ENCODE measurements at regions of chr4 and their contacts with region 1.

Region 1: GRCh38 chr4:781493-782216 is 44.3 kb downstream of the CPLX1 start:
- DNase-seq: peak; percentile 96 to 100 (median 99)
- H3K4me3 ChIP-seq: peak overlapping the region; percentile 74 to 100 (median 99)
- H3K27ac ChIP-seq: peak overlapping the region; percentile 73 to 99 (median 95)
- H3K27me3 ChIP-seq: peaks cover 0 to 25% (median 13%) of the 10 kb centered on the region in 45 donors
- CTCF ChIP-seq: peak in 13 of 56 donors; percentile 2 to 39 (median 12)

Region 2: DNA sequence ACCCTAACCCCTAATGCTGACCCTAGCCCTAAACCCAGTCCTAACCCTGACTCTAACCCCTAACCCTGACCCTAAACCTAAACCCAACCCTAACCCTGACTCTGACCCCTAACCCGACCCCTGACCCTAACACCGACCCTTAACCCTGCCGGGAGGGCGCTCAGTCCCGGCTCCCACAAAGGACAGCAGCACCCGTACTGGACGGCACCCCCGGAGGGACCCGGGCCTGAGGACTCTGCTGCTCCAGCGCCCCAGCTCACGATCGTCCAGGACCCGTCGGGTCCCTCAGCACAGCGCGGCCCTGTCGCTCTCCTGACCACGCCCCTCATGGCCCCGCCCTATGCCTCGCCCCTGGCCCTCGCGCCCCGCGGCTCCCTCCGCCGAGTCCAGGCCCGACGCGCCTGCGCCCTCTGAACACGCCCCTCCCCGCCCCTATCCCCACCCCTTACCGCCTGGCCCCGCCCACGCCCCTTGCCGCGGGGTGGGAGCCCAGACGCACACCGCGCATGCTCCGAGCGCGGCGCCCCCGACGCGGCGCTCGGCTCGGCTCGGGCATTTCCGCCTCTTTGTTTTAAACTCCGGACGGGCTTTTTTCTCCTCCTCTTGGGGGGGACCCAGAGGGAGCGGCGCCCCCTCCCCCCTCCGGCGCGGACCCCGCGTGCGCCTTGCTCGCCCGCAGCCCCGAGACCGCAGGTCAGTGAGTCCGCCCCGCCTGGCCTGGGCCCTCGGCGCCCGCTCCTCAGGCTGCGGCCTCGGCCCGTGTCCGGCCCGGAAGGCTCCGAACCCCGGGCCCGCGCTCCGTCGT is 76.2 kb before region 1 on chr4 and contains the start of gene PCGF3:
- intact Hi-C with region 1: loop called in 1 of 2 experiments (anchors 2 kb)
- DNase-seq: peak; percentile 83 to 96 (median 92)
- H3K4me3 ChIP-seq: peak within 1 kb of the TSS; percentile 53 to 100 (median 92)
- H3K27ac ChIP-seq: peak within 1 kb of the TSS in 46 of 59 donors; percentile 7 to 88 (median 68)
- H3K27me3 ChIP-seq: no peaks in the 10 kb centered on the region
- CTCF ChIP-seq: peak in 17 of 56 donors; percentile 9 to 44 (median 25)
- total RNA-seq, gene PCGF3: 32.0 to 54.7 (median 45.0) TPM

Region 3: GRCh38 chr4:856225-856901 is 74.7 kb after region 1 on chr4:
- intact Hi-C with region 1: no loop called
- DNase-seq: peak in 2 of 10 donors; percentile 19 to 26
- H3K4me3 ChIP-seq: no peak overlapping the region
- H3K27ac ChIP-seq: no peak overlapping the region
- H3K27me3 ChIP-seq: no peaks in the 10 kb centered on the region
- CTCF ChIP-seq: no peak

Region 4: GRCh38 chr4:986879-987623 is 205.4 kb after region 1 on chr4 and contains the start of gene IDUA:
- intact Hi-C with region 1: loop called in 1 of 2 experiments (anchors 10 kb)
- DNase-seq: peak; percentile 74 to 94 (median 88)
- H3K4me3 ChIP-seq: peak within 1 kb of the TSS; percentile 61 to 93 (median 79)
- H3K27ac ChIP-seq: peak within 1 kb of the TSS in 50 of 59 donors; percentile 2 to 88 (median 72)
- H3K27me3 ChIP-seq: no peaks in the 10 kb centered on the region
- CTCF ChIP-seq: peak in 55 of 56 donors; percentile 9 to 77 (median 54)
- total RNA-seq, gene IDUA: 25.5 to 80.1 (median 43.3) TPM

Region 5: GRCh38 chr4:1113311-1114009 is 331.8 kb after region 1 on chr4 and contains the start of gene RNF212:
- intact Hi-C with region 1: no loop called
- DNase-seq: peak in 1 of 10 donors; percentile 29
- H3K4me3 ChIP-seq: peak within 1 kb of the TSS in 32 of 59 donors; percentile 3 to 49 (median 28)
- H3K27ac ChIP-seq: no peak within 1 kb of the TSS
- H3K27me3 ChIP-seq: peaks cover 0 to 30% (median 6%) of the 10 kb centered on the region in 45 donors
- CTCF ChIP-seq: no peak
- total RNA-seq, gene RNF212: 0.96 to 14.7 (median 5.2) TPM

Region 6: DNA sequence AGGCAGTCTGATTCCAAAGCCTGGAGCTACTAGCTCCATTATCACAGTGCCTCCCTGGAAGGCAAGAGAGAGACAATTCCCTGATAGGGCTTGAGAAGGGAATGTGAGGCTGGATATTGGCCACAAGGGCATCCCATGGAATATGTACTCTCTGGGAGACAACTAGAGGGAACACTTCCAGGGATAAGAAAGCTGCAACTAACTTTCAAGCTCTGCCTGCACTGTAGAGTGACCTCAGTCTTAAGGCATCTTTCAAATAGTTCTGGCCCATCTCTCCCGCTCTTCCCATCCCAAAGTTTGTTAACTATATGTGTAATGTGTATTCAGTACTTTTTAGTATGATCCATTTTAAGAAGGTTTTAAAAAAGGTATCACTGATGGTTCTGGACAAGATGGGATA is 344.9 kb after region 1 on chr4:
- intact Hi-C with region 1: no loop called
- DNase-seq: no peak
- H3K4me3 ChIP-seq: no peak overlapping the region
- H3K27ac ChIP-seq: no peak overlapping the region
- H3K27me3 ChIP-seq: no peaks in the 10 kb centered on the region
- CTCF ChIP-seq: no peak

Measured in dorsolateral prefrontal cortex (tissue), 120 donors.